ENCODE measurements at regions of chr1 and their contacts with region 1.

Region 1: GRCh38 chr1:23149114-23149513 is 19.5 kb downstream of the LUZP1 start:
- DNase-seq: no peak
- H3K4me3 Mint-ChIP-seq: no peak overlapping the region
- H3K27ac Mint-ChIP-seq: no peak overlapping the region
- H3K4me1 Mint-ChIP-seq: peaks cover 19% of the 10 kb centered on the region
- H3K27me3 Mint-ChIP-seq: no peaks in the 10 kb centered on the region

Region 2: GRCh38 chr1:22995774-22996173 is 153.3 kb before region 1 on chr1:
- CTCF ChIA-PET with region 1: no interaction called
- POLR2A ChIA-PET with region 1: no interaction called
- intact Hi-C with region 1: no loop called
- DNase-seq: no peak
- H3K4me3 Mint-ChIP-seq: no peak overlapping the region
- H3K27ac Mint-ChIP-seq: no peak overlapping the region
- H3K4me1 Mint-ChIP-seq: no peaks in the 10 kb centered on the region
- H3K27me3 Mint-ChIP-seq: peaks cover 2% of the 10 kb centered on the region

Region 3: GRCh38 chr1:23114424-23115079 is 34.6 kb before region 1 on chr1:
- CTCF ChIA-PET with region 1: no interaction called
- POLR2A ChIA-PET with region 1: no interaction called
- intact Hi-C with region 1: loop called (anchors 2 kb)
- DNase-seq: no peak
- H3K4me3 Mint-ChIP-seq: no peak overlapping the region
- H3K27ac Mint-ChIP-seq: peak overlapping the region; percentile 23
- H3K4me1 Mint-ChIP-seq: peaks cover 77% of the 10 kb centered on the region
- H3K27me3 Mint-ChIP-seq: no peaks in the 10 kb centered on the region

Region 4: GRCh38 chr1:23132033-23132432 is 17.1 kb before region 1 on chr1:
- CTCF ChIA-PET with region 1: no interaction called
- POLR2A ChIA-PET with region 1: no interaction called
- intact Hi-C with region 1: loop called (anchors 2 kb)
- DNase-seq: no peak
- H3K4me3 Mint-ChIP-seq: no peak overlapping the region
- H3K27ac Mint-ChIP-seq: peak overlapping the region; percentile 6
- H3K4me1 Mint-ChIP-seq: peaks cover 15% of the 10 kb centered on the region
- H3K27me3 Mint-ChIP-seq: no peaks in the 10 kb centered on the region

Region 5: DNA sequence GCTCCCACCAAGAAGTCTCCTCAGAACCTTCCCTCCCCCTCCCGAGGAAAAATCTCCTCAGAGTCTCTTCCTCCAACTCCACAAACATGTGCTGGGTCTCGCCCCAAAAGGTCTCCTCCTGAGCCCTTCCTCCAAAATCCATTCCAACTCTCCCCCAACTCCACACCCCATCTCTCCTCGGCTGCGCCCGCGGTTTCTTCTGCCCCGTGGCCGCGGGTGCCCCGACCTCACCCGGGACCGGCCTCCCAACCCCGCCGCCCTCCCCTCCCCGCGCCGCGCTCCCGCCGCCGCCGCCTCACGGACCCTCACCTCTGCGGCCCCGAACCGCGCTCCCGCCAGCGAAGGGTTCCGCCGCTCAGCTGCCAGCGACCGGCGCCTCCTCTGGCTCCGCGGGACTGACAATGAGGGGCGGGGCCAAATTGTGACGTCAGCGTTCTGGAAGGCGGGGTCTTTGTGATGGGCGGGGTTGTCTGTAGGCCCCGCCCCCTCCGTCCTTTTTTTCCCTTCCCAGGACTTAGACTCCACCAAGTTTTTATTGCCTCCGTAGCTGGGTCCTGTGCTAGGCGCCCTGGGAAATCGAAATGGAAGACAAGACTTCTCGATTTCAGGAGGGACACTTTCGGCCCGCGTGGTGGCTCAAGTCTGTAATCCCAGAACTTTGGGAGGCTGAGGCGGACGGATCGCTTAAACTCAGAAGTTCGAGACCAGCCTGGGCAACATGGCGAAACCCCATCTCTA is 19.5 kb after region 1 on chr1 and contains the start of gene LUZP1:
- CTCF ChIA-PET with region 1: interaction called, 3 read pairs
- POLR2A ChIA-PET with region 1: no interaction called
- intact Hi-C with region 1: loop called (anchors 2 kb)
- DNase-seq: peak; percentile 91
- H3K4me3 Mint-ChIP-seq: peak within 1 kb of the TSS; percentile 96
- H3K27ac Mint-ChIP-seq: peak within 1 kb of the TSS; percentile 85
- H3K4me1 Mint-ChIP-seq: peaks cover 26% of the 10 kb centered on the region
- H3K27me3 Mint-ChIP-seq: no peaks in the 10 kb centered on the region
- total RNA-seq, gene LUZP1: 19.0 to 21.2 TPM